ENCODE measurements at regions of chr1 and their contacts with region 1.

Region 1: GRCh38 chr1:160550572-160551034 is 27.5 kb upstream of the SLAMF6 start:
- DNase-seq: peak; percentile 48
- H3K4me3 Mint-ChIP-seq: no peak overlapping the region
- H3K27ac Mint-ChIP-seq: no peak overlapping the region
- H3K4me1 Mint-ChIP-seq: peaks cover 3% of the 10 kb centered on the region
- H3K27me3 Mint-ChIP-seq: no peaks in the 10 kb centered on the region

Region 2: DNA sequence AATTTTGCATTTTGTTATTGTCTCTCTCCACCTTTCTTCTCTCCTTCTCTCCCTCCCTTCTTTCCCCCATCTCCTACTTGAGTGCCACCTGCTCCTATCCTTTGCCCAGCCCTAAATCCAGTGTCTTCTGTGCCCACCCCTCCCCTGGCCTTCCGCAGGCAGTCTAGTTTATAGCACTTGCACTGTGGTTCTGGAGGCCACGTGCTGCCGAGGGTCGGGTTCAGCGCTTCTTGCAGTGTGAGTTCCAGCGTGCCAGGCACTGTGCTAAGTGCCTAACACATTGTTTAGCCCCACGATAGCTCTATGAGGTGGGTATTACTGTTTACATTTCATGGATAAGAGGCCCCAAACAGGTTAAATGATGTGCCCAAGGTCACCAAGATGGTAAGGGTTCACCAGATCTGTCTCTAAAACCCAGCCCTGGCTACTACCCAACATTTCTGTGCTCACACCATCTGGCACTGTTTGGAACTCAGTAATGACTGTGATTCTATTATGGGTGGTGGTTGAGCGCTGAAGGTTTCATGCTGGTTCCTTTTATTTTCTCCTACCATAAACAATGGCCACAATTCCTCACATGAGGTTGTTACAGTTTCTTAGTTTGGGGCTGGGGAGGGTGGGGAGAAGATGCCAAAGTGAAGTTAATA is 413.3 kb before region 1 on chr1:
- CTCF ChIA-PET with region 1: no interaction called
- DNase-seq: no peak
- H3K4me3 Mint-ChIP-seq: no peak overlapping the region
- H3K27ac Mint-ChIP-seq: no peak overlapping the region
- H3K4me1 Mint-ChIP-seq: no peaks in the 10 kb centered on the region
- H3K27me3 Mint-ChIP-seq: peaks cover 48% of the 10 kb centered on the region

Region 3: GRCh38 chr1:160539990-160540858 is 10.4 kb before region 1 on chr1:
- CTCF ChIA-PET with region 1: interaction called, 17 read pairs
- DNase-seq: peak; percentile 71
- H3K4me3 Mint-ChIP-seq: peak overlapping the region; percentile 43
- H3K27ac Mint-ChIP-seq: peak overlapping the region; percentile 91
- H3K4me1 Mint-ChIP-seq: peaks cover 51% of the 10 kb centered on the region
- H3K27me3 Mint-ChIP-seq: no peaks in the 10 kb centered on the region